Caco-2 (cell line): ENCODE measurements at regions of chr1 and their contacts with region 1.

Region 1: GRCh38 chr1:153727463-153728304 is at the start of gene INTS3:
- DNase-seq: peak; percentile 99 to 100
- H3K4me3 ChIP-seq: peak within 1 kb of the TSS; percentile 95
- H3K4me3 Mint-ChIP-seq: peak within 1 kb of the TSS; percentile 92
- H3K27ac Mint-ChIP-seq: peak within 1 kb of the TSS; percentile 95
- H3K4me1 ChIP-seq: peaks cover 6% of the 10 kb centered on the region
- H3K4me1 Mint-ChIP-seq: peaks cover 14% of the 10 kb centered on the region
- H3K27me3 ChIP-seq: no peaks in the 10 kb centered on the region
- H3K27me3 Mint-ChIP-seq: no peaks in the 10 kb centered on the region
- CTCF ChIP-seq: no peak
- total RNA-seq, gene INTS3: 39.0 and 43.4 TPM in 2 replicates

Region 2: GRCh38 chr1:153742411-153743142 is 14.9 kb after region 1 on chr1:
- CTCF ChIA-PET with region 1: interaction called, 7 read pairs
- POLR2A ChIA-PET with region 1: interaction called, 16 read pairs
- intact Hi-C with region 1: loop called (anchors 2 kb)
- DNase-seq: peak; percentile 77 to 78
- H3K4me3 ChIP-seq: no peak overlapping the region
- H3K4me3 Mint-ChIP-seq: peak overlapping the region; percentile 44
- H3K27ac Mint-ChIP-seq: peak overlapping the region; percentile 89
- H3K4me1 ChIP-seq: peaks cover 33% of the 10 kb centered on the region
- H3K4me1 Mint-ChIP-seq: peaks cover 33% of the 10 kb centered on the region
- H3K27me3 ChIP-seq: no peaks in the 10 kb centered on the region
- H3K27me3 Mint-ChIP-seq: no peaks in the 10 kb centered on the region
- CTCF ChIP-seq: no peak

Region 3: GRCh38 chr1:153775458-153776327 is 48.0 kb after region 1 on chr1:
- CTCF ChIA-PET with region 1: interaction called, 5 read pairs
- POLR2A ChIA-PET with region 1: interaction called, 11 read pairs
- intact Hi-C with region 1: no loop called
- DNase-seq: peak; percentile 86 to 87
- H3K4me3 ChIP-seq: peak overlapping the region; percentile 55
- H3K4me3 Mint-ChIP-seq: peak overlapping the region; percentile 82
- H3K27ac Mint-ChIP-seq: peak overlapping the region; percentile 59
- H3K4me1 ChIP-seq: peaks cover 11% of the 10 kb centered on the region
- H3K4me1 Mint-ChIP-seq: no peaks in the 10 kb centered on the region
- H3K27me3 ChIP-seq: no peaks in the 10 kb centered on the region
- H3K27me3 Mint-ChIP-seq: no peaks in the 10 kb centered on the region
- CTCF ChIP-seq: no peak

Region 4: DNA sequence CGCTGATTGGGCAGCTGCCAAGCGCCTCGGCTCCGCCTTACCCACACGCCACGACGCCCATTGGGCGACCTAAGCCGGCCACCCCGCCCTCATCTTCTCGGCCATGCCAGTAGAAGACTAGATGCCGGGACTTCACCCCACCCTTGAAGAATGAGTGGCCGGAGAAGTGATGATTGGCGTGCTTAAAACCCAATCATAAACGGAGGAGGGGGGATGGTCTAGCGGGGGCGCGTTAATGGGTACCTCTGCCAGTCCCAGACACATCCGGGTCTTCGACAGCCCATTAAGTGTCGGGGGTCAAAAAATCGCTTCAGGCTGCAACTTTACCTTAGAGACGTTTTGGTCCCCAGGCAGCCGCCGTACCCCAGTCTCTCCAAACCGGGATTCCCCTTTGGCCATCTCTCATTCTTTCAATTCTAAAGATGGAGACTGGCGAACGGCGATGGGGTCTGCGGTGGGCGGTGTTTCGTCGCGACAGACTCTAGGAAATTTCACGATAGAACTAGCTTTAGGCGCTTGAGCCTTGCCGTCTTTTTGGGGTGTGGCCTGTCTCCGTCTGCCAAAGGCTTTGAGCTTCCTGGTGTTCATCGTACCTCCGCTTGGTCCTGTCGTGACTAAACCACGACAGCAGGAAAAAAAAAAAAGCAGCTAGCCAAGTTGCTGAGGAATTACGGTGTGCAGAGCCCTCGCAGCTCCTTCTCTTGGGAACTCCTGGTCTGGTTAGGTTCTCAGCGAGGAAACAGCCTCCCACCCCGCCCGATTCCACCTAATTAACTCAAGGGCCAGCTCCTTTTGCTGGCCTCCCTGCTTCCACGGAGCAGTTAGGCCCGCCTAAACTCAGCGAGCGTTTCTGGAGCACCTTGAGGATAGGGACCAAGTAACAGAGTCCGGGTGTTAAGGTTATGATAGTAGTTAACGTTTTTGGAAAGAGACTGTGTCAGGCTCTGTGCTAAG is 195.6 kb after region 1 on chr1 and contains the start of gene GATAD2B:
- CTCF ChIA-PET with region 1: no interaction called
- POLR2A ChIA-PET with region 1: no interaction called
- intact Hi-C with region 1: loop called (anchors 2 kb)
- DNase-seq: peak; percentile 99 to 100
- H3K4me3 ChIP-seq: peak within 1 kb of the TSS; percentile 65
- H3K4me3 Mint-ChIP-seq: peak within 1 kb of the TSS; percentile 71
- H3K27ac Mint-ChIP-seq: peak within 1 kb of the TSS; percentile 86
- H3K4me1 ChIP-seq: peaks cover 16% of the 10 kb centered on the region
- H3K4me1 Mint-ChIP-seq: peaks cover 15% of the 10 kb centered on the region
- H3K27me3 ChIP-seq: no peaks in the 10 kb centered on the region
- H3K27me3 Mint-ChIP-seq: no peaks in the 10 kb centered on the region
- CTCF ChIP-seq: no peak
- total RNA-seq, gene GATAD2B: 38.0 and 42.6 TPM in 2 replicates